ENCODE measurements at regions of chr17 and their contacts with region 1.

Region 1: DNA sequence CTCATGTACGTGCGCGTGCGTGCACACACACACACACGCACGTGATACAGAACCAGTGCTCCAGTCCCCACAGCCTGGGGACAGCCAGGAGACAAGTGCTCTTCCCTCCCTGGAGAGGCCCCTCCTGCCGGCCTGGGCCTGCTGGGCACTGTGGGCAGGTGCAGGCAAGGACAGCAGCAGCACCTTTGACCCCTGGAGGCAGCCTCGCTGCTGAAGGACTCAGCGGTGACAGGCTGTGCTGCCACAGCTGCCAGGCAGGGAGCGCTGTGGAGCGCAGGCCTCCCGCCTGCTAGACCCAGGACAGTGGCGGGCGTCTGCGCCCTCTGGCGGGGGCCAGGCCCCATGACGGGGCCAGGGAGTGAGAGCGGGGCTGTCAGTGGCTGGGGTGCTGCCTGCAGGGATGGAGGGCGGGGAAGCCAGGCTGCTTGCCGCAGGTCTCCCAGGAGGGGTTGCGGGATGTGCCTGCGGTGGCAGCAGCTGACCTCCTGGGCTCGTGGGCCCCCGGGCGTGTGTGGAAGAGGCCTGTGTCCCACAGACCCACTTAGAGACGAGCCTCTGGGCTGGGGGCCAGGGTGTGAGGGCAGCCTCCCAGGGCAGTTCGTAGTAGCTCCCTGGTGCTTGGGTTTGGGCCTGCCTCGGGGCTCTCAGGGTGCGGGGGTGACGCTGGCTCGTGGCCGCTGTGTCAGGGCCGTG is 63.5 kb upstream of the PVALEF start:
- DNase-seq: peak; percentile 92
- ATAC-seq: peak; percentile 84

Region 2: DNA sequence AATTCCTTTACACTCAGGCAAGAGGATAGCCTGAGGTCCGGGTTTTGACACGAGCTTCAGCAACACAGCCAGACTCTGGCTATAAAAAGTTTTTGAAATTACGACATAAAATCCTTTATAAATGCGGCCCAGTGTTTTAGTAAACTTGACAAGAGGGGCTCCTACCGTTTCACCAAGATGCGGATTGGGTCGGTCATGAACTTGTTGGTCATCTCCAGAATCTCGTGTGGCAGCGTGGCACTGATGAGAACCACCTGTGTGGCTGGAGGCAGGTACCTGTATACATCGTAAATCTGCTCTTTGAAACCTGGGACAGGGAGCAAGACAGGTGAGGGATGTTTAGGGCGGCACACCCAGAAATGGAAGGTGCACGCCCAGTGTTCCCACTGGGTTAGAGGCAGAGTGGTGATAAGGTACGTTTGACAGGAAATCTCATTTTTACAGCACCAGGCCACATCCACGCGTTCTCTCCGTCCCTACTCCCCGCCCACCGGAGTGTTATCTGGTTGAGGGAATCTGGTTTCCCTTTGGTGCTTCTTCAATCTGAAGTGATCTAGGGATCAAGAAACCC is 962.8 kb before region 1 on chr17:
- intact Hi-C with region 1: no loop called
- DNase-seq: no peak
- ATAC-seq: no peak

Region 3: DNA sequence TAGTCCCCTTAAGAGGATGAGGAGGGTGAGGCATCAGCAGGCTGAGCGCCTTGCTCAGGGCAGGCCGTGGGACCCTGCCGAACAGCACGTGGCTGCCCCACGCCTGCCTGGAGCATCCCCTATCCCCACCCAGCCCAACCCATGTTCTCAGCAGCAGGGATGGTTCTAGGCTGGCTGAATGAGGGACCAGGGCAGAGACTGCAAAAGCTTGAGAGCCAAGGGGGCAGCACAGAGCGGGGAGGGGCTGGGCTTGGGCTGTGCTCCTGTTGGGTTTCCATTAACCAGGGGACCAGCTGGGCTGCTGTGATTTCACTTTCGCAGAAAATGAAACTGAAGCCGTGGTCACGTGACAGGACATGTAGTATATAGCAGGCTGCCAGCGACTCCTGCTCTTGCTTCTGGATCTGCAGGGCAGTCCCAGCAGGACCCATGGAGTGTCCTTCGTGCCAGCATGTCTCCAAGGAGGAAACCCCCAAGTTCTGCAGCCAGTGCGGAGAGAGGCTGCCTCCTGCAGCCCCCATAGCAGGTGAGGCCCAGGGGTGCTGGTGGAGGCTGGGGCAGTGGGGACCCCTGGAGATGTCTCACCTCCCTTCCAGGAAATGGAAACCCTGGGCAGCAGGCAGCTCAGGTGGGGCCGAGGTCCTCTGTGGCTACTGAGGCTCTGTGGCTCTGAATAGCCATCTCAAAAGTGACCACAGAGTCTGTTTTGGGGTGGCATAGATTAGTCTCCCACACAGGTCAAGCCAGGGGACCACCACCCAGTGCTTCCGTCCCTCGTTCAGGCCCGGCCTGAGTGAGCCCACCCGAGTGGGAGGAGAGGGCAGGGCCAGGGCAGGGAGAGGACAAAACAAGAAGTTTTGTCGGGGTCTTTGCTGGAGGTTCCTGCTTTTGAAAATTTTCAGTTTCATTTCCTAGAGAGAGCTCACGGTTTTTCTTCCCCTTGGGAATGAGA is 838.2 kb before region 1 on chr17:
- intact Hi-C with region 1: no loop called
- DNase-seq: peak; percentile 79
- ATAC-seq: peak; percentile 50

Region 4: DNA sequence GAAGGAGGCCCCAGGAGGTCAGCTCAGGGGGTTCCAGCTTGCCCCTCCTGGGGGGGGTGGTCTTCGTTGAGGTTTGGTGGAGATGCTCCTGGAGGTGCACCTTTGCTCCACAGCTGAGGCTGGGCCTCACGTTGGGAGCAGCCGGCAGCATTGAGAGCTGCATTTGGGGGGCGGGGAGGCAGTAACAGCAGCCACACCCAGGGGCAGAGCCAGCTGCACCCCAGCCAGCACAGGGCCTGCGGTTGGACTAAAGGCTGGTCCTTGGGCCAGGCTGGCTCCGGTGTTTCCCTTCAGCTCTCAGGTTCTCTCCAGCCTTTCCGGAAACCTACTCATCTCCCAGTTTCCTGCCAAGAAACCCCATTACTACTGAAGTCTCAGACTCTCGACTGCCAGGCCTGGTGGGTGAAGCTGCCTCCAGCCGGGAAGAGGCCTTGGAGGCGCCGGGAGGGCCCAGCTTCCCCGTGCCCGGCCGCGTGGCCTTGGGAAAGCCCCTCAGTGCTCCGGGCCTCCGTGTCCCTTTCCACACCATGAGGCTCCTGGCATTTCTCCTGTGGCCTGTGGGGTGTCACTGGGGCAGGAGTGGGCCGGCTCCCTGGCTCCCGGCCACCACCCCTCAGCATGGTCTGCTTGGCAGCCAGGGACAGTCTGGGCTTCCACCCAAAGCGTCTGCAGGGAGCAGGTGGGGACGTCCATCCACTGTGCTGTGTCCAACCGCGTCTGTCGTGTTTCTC is 80.8 kb before region 1 on chr17:
- intact Hi-C with region 1: loop called (anchors 10 kb)
- DNase-seq: peak; percentile 87
- ATAC-seq: peak; percentile 90

Region 5: DNA sequence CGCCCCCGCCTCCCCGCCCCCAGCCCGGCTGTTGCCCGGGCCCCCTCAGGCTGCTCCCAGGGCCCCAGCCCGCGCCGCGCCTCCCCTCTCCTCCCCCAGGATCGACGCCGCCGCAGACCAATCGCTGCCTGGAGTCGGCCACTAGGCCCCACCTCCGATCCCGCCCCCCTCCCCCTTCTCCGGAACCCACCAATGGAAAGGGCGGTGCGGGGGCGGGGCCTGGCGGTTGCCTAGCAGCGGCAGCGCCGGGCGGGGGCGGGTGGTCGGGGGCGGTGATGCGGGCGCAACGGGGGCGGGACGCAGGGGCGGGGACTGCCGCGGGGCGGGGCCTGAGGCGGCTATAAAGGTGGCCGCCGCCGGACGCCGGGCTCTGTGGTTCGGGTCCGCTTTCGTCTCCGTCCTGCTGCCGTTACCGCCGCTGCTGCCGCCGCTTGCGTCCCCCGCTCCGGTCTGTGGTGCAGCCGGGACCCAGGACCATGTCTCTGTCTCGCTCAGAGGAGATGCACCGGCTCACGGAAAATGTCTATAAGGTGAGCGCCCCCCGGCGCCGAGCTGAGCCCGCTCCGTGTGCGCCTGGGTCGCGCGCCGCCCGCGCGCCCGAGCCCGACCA is 66.9 kb before region 1 on chr17 and contains the start of gene BAIAP2:
- intact Hi-C with region 1: no loop called
- DNase-seq: peak; percentile 99
- ATAC-seq: peak; percentile 78
- total RNA-seq, gene BAIAP2: 32.7 TPM

Region 6: GRCh38 chr17:81230043-81230820 is 128.5 kb after region 1 on chr17:
- intact Hi-C with region 1: no loop called
- DNase-seq: no peak
- ATAC-seq: peak; percentile 14